ENCODE measurements at regions of chr20 and their contacts with region 1.

Region 1: DNA sequence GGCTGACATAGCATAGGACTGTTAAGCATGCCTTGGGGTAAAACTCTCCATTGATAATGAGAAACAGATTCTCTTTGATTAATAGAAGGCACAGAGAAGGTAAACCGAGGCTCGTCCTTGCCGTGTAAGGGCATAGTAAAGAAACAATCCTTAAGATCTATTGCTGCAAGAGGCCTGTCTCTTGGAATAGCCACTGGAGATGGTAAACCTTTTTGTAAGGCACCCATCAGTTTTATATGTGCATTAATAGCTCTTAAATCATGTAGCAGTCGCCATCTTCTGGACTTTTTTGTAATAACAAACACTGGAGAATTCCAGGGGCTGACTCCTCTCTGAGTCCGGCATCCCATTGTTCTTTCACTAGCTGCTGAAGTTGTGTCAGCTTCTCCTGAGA is 8.4 kb upstream of the ABHD12 start:
- DNase-seq: peak in 4 of 10 donors; percentile 21 to 71 (median 53)
- H3K4me3 ChIP-seq: peak overlapping the region in 2 of 59 donors; percentile 4 to 17
- H3K27ac ChIP-seq: peak overlapping the region in 46 of 59 donors; percentile 2 to 86 (median 52)
- H3K27me3 ChIP-seq: no peaks in the 10 kb centered on the region
- CTCF ChIP-seq: peak; percentile 28 to 91 (median 75)

Region 2: GRCh38 chr20:24872291-24873024 is 526.6 kb before region 1 on chr20:
- intact Hi-C with region 1: no loop called
- DNase-seq: no peak
- H3K4me3 ChIP-seq: no peak overlapping the region
- H3K27ac ChIP-seq: peak overlapping the region in 7 of 59 donors; percentile 4 to 43 (median 13)
- H3K27me3 ChIP-seq: peaks cover 0 to 2% (median 0%) of the 10 kb centered on the region in 45 donors
- CTCF ChIP-seq: no peak

Region 3: DNA sequence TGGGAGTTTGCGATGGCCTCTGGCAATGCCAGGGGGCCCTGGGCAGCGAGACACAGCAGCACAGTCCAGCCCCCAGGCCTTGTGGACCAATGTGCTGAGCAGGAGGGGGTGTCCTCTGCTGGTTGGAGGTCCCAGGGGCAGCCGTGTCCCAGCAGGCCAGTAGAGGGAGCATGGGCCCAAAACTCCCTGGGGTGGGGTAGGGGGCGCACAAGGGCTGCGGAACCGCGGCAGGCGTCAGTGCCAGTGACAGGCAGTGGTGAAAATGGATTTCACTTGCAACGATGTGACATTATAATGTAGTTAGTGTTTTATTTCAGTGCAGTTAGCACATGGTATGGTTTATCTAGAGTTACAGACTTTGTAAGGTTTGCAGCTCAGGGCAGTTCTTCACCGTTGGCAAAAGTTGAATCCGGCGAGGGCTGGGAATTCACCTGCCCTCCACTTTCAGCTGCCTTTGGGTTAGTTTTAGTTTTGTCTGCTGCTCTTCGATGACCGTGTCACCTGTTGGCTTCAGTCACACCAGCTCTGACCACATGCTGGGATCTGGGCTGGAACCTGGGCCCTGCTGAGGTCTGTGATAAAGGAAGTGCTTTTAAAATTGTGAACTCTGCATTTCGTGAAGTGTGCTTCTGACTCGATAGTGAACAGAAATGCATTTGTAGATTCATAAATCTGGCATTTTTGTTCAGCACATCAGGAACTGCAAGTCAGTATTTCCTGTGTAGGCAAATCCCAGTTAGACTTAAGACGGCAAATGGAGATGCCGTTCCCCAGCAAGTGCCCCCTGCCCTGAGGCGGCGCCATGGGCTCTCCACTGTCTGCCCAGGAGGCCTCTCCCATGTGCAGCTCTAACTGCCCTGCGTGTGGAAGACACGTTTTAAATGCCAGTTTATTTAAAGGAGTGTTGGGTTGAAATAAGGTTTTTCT is 104.3 kb before region 1 on chr20:
- intact Hi-C with region 1: loop called in 1 of 2 experiments (anchors 5 kb)
- DNase-seq: peak in 8 of 10 donors; percentile 63 to 83 (median 69)
- H3K4me3 ChIP-seq: no peak overlapping the region
- H3K27ac ChIP-seq: peak overlapping the region in 55 of 59 donors; percentile 5 to 85 (median 73)
- H3K27me3 ChIP-seq: no peaks in the 10 kb centered on the region
- CTCF ChIP-seq: peak; percentile 38 to 96 (median 88)

Region 4: GRCh38 chr20:25310268-25310920 is 88.6 kb before region 1 on chr20:
- intact Hi-C with region 1: loop called in 1 of 2 experiments (anchors 5 kb)
- DNase-seq: peak in 8 of 10 donors; percentile 10 to 64 (median 56)
- H3K4me3 ChIP-seq: peak overlapping the region in 48 of 59 donors; percentile 4 to 57 (median 30)
- H3K27ac ChIP-seq: peak overlapping the region in 58 of 59 donors; percentile 4 to 90 (median 80)
- H3K27me3 ChIP-seq: no peaks in the 10 kb centered on the region
- CTCF ChIP-seq: peak in 51 of 56 donors; percentile 13 to 66 (median 48)

Region 5: GRCh38 chr20:25336561-25337422 is 62.2 kb before region 1 on chr20:
- intact Hi-C with region 1: loop called in 1 of 2 experiments (anchors 2 kb)
- DNase-seq: peak in 2 of 10 donors; percentile 57 to 66
- H3K4me3 ChIP-seq: no peak overlapping the region
- H3K27ac ChIP-seq: peak overlapping the region in 25 of 59 donors; percentile 2 to 68 (median 40)
- H3K27me3 ChIP-seq: no peaks in the 10 kb centered on the region
- CTCF ChIP-seq: peak in 55 of 56 donors; percentile 19 to 78 (median 50)

Measured in dorsolateral prefrontal cortex (tissue), 120 donors.